ENCODE measurements at regions of chr5 and their contacts with region 1.

Region 1: DNA sequence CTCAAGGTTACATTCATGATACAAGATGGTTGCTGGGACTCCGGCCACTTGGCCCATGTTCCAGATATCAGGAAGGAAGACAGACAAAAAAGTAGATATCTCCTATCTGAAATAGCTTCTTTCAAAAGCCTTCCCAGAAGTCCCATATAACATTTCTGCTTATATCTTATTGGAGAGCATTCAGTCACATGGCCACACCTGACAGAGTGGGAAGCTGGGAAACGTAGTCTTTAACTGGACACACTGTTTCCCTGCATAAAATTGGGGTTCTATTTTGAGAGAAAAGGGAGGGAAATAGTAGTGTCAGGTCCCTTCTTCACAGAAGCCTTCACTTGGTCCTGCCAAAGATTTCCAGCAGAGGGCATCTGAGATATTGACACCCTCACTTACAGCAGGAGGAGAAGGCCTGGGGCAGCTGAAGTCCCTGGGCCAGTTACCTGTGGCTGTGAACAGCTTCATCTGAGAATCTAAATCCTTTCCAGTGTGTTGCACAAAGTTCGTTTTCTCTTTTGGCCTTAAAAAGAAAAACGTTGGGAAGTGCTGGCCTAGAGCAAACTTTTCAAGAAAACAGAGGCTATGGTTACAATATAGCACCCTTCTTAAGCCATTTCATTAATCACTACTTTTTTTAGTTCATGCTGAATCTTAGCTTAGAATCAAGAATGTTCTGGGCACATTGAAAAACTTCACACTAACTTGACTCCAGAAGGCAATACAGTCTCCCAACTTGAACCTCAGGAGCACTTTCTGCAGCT is 33.5 kb downstream of the SPEF2 start:
- DNase-seq: peak; percentile 29 to 79 (median 63)
- ATAC-seq: peak; percentile 95
- H3K4me3 ChIP-seq: no peak overlapping the region
- H3K4me3 Mint-ChIP-seq: no peak overlapping the region
- H3K27ac ChIP-seq: no peak overlapping the region
- H3K27ac Mint-ChIP-seq: peak overlapping the region; percentile 30
- H3K4me1 ChIP-seq: peaks cover 7% of the 10 kb centered on the region
- H3K4me1 Mint-ChIP-seq: peaks cover 10% of the 10 kb centered on the region
- H3K27me3 ChIP-seq: no peaks in the 10 kb centered on the region
- H3K27me3 Mint-ChIP-seq: no peaks in the 10 kb centered on the region
- CTCF ChIP-seq: peak; percentile 77

Region 2: DNA sequence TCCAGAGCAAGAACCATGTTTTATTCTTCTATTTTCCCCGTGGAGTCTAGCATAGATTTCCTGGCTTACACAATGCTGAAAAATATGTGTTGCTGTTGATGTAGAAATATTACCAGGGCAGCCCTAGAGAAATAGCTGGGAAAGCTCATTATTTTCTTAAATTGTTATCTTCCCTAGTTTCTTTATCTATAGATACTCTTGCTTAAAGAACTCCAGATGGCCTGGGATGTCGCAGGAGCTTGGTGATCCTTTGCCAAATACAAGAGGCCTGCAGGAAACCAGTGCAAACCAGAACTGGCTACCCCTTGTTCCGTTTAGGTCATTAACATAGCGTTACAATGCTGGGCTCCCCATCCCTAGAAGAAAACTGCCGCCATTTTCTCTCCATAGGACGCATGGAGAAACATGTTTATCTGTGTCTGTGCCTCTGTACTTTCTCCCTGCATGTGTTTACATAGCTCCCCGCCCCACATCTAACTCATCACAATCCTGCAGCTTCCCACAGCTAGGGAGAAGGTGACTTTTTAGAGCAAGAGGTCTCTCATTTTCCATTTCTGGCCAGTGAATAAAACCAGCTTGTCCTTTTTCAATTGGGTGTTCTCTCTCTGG is 427.3 kb before region 1 on chr5:
- CTCF ChIA-PET with region 1: no interaction called
- POLR2A ChIA-PET with region 1: no interaction called
- intact Hi-C with region 1: no loop called
- DNase-seq: no peak
- ATAC-seq: no peak
- H3K4me3 ChIP-seq: no peak overlapping the region
- H3K4me3 Mint-ChIP-seq: no peak overlapping the region
- H3K27ac ChIP-seq: no peak overlapping the region
- H3K27ac Mint-ChIP-seq: no peak overlapping the region
- H3K4me1 ChIP-seq: no peaks in the 10 kb centered on the region
- H3K4me1 Mint-ChIP-seq: no peaks in the 10 kb centered on the region
- H3K27me3 ChIP-seq: no peaks in the 10 kb centered on the region
- H3K27me3 Mint-ChIP-seq: peaks cover 46% of the 10 kb centered on the region
- CTCF ChIP-seq: no peak

Region 3: GRCh38 chr5:35575578-35575977 is 75.6 kb before region 1 on chr5:
- CTCF ChIA-PET with region 1: no interaction called
- POLR2A ChIA-PET with region 1: no interaction called
- intact Hi-C with region 1: no loop called
- DNase-seq: no peak
- ATAC-seq: no peak
- H3K4me3 ChIP-seq: no peak overlapping the region
- H3K4me3 Mint-ChIP-seq: no peak overlapping the region
- H3K27ac ChIP-seq: no peak overlapping the region
- H3K27ac Mint-ChIP-seq: no peak overlapping the region
- H3K4me1 ChIP-seq: no peaks in the 10 kb centered on the region
- H3K4me1 Mint-ChIP-seq: no peaks in the 10 kb centered on the region
- H3K27me3 ChIP-seq: no peaks in the 10 kb centered on the region
- H3K27me3 Mint-ChIP-seq: peaks cover 5% of the 10 kb centered on the region
- CTCF ChIP-seq: no peak

Region 4: GRCh38 chr5:35640623-35641022 is 10.6 kb before region 1 on chr5:
- CTCF ChIA-PET with region 1: interaction called, 22 read pairs
- POLR2A ChIA-PET with region 1: no interaction called
- intact Hi-C with region 1: no loop called
- DNase-seq: no peak
- ATAC-seq: no peak
- H3K4me3 ChIP-seq: no peak overlapping the region
- H3K4me3 Mint-ChIP-seq: no peak overlapping the region
- H3K27ac ChIP-seq: no peak overlapping the region
- H3K27ac Mint-ChIP-seq: no peak overlapping the region
- H3K4me1 ChIP-seq: no peaks in the 10 kb centered on the region
- H3K4me1 Mint-ChIP-seq: no peaks in the 10 kb centered on the region
- H3K27me3 ChIP-seq: no peaks in the 10 kb centered on the region
- H3K27me3 Mint-ChIP-seq: no peaks in the 10 kb centered on the region
- CTCF ChIP-seq: no peak

Region 5: DNA sequence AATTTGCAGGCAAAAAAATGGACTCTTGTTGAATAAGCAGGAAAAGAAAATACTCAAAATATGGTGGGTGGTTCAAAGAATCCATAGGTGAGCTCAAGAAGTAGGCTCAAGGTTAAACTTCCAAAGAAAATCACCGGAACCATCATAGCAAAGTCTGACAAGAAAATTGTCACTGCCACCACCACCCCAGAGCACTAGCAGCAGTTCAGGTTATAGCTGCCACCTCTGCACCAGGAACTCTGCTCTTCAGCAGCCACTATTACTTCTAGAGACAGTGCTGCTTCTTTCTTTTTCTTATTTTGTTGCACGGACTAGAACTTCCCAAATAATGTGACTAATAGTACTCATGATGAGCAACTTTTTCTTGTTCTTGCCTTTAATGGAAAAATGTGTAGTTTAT is 36.8 kb after region 1 on chr5:
- CTCF ChIA-PET with region 1: interaction called, 11 read pairs
- POLR2A ChIA-PET with region 1: no interaction called
- intact Hi-C with region 1: no loop called
- DNase-seq: no peak
- ATAC-seq: no peak
- H3K4me3 ChIP-seq: no peak overlapping the region
- H3K4me3 Mint-ChIP-seq: no peak overlapping the region
- H3K27ac ChIP-seq: no peak overlapping the region
- H3K27ac Mint-ChIP-seq: no peak overlapping the region
- H3K4me1 ChIP-seq: no peaks in the 10 kb centered on the region
- H3K4me1 Mint-ChIP-seq: no peaks in the 10 kb centered on the region
- H3K27me3 ChIP-seq: no peaks in the 10 kb centered on the region
- H3K27me3 Mint-ChIP-seq: no peaks in the 10 kb centered on the region
- CTCF ChIP-seq: no peak

Region 6: DNA sequence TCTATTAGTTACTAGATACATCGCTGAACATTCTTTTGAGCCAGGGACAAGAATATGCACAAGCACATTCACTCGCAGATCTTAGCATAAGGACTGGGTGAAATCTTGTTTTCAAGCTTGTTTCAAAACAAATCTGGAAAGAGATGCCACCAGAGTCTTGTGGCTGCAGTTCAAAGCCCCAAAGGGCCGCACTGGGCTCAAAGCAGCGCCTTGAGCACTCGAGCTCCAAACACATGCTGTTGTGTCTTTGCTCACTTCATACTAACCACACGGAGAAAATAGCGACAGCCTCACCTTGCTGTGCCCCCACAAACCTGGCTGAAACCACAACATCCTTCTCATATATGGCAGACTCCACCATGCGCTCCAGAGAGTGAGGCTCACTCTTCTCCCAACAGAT is 171.3 kb after region 1 on chr5:
- CTCF ChIA-PET with region 1: interaction called, 23 read pairs
- POLR2A ChIA-PET with region 1: interaction called, 6 read pairs
- intact Hi-C with region 1: no loop called
- DNase-seq: peak; percentile 22 to 84 (median 63)
- ATAC-seq: peak; percentile 74
- H3K4me3 ChIP-seq: no peak overlapping the region
- H3K4me3 Mint-ChIP-seq: peak overlapping the region; percentile 58
- H3K27ac ChIP-seq: peak overlapping the region; percentile 12 to 34
- H3K27ac Mint-ChIP-seq: peak overlapping the region; percentile 94
- H3K4me1 ChIP-seq: peaks cover 93% of the 10 kb centered on the region
- H3K4me1 Mint-ChIP-seq: peaks cover 90% of the 10 kb centered on the region
- H3K27me3 ChIP-seq: no peaks in the 10 kb centered on the region
- H3K27me3 Mint-ChIP-seq: no peaks in the 10 kb centered on the region
- CTCF ChIP-seq: no peak

Region 7: GRCh38 chr5:35863159-35863558 is 212.0 kb after region 1 on chr5:
- CTCF ChIA-PET with region 1: interaction called, 14 read pairs
- POLR2A ChIA-PET with region 1: interaction called, 9 read pairs
- intact Hi-C with region 1: loop called (anchors 2 to 5 kb)
- DNase-seq: peak in 1 of 9 experiments; percentile 22
- ATAC-seq: no peak
- H3K4me3 ChIP-seq: peak overlapping the region; percentile 66 to 80
- H3K4me3 Mint-ChIP-seq: peak overlapping the region; percentile 91
- H3K27ac ChIP-seq: peak overlapping the region; percentile 59 to 97
- H3K27ac Mint-ChIP-seq: peak overlapping the region; percentile 96
- H3K4me1 ChIP-seq: peaks cover 52% of the 10 kb centered on the region
- H3K4me1 Mint-ChIP-seq: peaks cover 76% of the 10 kb centered on the region
- H3K27me3 ChIP-seq: no peaks in the 10 kb centered on the region
- H3K27me3 Mint-ChIP-seq: no peaks in the 10 kb centered on the region
- CTCF ChIP-seq: no peak

Measured in CD8-positive, alpha-beta T cell (primary cell).